Left cardiac atrium (tissue), 4 donors: ENCODE measurements at regions of chr1 and their contacts with region 1.

Region 1: DNA sequence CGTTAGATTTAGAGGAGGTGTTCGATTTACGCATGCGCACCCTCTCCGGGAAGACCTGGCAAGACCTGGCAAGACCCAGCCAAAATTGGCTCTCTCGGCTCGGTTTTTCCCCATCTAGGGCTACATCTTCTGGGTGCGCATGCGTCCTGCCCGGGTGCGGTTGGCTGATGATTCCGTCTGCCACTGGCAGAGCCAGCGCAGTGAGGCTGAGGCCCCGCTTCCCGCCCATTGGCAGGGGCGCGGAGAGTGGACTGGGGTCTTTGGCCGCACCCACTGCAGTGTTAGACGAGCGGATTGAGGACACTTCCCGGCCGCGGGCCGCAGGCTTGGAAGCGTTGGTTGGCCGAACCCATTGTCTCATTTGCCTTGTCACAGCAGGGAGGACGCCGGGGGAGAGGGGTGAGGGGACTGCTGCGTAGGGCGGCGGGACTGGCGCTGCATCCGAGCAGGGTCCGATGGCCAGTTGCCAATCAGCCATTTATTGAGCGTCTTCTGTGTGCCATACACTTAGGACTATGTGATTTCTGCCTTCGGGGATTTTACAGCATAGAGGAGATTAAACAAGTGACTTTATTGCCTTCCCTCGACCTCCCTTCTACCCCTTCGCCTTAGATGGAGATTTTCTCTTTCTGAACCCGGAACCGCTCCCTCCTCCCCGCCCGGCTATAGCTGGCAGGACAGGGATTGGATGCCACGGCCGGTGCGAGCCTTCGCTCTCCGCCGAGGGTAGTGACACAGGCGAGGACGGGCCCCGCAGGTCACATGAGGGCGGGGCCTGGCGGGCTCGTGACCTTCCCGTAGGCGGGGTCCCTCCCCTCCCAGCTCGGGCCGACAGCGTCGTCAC is 43.7 kb downstream of the MEF2D start:
- DNase-seq: peak; percentile 99
- ATAC-seq: peak; percentile 94 to 95

Region 2: GRCh38 chr1:156504821-156505678 is 48.2 kb after region 1 on chr1:
- intact Hi-C with region 1: loop called in 1 of 2 experiments (anchors 2 kb)
- DNase-seq: peak; percentile 100
- ATAC-seq: peak; percentile 54 to 65

Region 3: GRCh38 chr1:156583821-156584622 is 127.2 kb after region 1 on chr1:
- intact Hi-C with region 1: loop called in 1 of 2 experiments (anchors 5 kb)
- DNase-seq: peak; percentile 66
- ATAC-seq: peak; percentile 50 to 54

Region 4: GRCh38 chr1:156601122-156601830 is 144.4 kb after region 1 on chr1 and contains the start of gene GPATCH4:
- intact Hi-C with region 1: loop called (anchors 2 to 5 kb)
- DNase-seq: peak; percentile 87
- ATAC-seq: peak; percentile 90
- total RNA-seq, gene GPATCH4: 14.6 to 27.0 TPM

Region 5: GRCh38 chr1:156608036-156608674 is 151.3 kb after region 1 on chr1:
- intact Hi-C with region 1: loop called (anchors 2 to 5 kb)
- DNase-seq: no peak
- ATAC-seq: peak; percentile 95 to 96